Caco-2 (cell line): ENCODE measurements at regions of chr21 and their contacts with region 1.

Region 1: DNA sequence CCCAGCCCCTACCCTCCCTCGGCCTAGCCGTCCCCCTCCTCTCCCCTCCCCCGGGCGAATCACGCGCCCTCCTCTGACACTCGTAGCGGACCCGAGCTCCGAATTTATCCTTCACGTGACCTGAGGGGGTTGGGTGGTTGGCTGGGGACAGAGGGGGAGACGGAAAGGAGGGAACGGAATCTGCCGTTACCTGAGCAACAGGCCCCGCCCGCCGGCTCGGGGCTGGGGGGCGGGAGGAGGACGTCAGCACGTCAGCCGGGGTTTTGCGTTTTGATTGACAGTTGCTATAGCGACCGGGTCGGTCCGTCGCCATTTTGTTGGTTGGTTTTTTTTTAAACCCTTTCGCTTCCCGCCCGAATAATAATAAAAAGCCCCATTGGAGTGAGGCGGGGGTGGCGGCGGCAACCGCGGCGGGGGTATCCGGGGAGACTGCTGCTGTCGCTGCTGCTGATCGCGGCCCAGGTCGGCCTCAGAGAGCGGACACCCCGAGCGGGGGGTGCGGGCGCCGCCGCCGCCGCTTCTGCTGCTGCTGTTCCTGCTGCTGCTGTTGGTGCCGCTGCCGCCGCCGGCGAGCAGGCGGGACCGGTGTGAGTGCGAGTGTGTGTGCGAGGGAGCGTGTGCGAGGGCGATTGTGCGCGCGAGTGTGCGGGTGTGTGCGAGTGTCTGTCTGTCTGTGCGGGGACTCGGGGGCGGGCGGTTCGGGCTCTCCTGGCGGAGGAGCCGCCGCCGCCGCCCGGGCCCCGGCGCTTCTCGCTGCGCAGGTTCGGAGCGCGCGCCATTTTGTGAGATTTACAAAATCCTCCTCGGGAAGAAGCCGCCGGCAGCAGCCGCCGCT is at the start of gene DYRK1A:
- DNase-seq: peak; percentile 98 to 100
- H3K4me3 ChIP-seq: peak within 1 kb of the TSS; percentile 92
- H3K4me3 Mint-ChIP-seq: peak within 1 kb of the TSS; percentile 99
- H3K27ac Mint-ChIP-seq: peak within 1 kb of the TSS; percentile 100
- H3K4me1 ChIP-seq: peaks cover 31% of the 10 kb centered on the region
- H3K4me1 Mint-ChIP-seq: peaks cover 18% of the 10 kb centered on the region
- H3K27me3 ChIP-seq: no peaks in the 10 kb centered on the region
- H3K27me3 Mint-ChIP-seq: no peaks in the 10 kb centered on the region
- CTCF ChIP-seq: no peak
- total RNA-seq, gene DYRK1A: 50.9 and 51.5 TPM in 2 replicates

Region 2: GRCh38 chr21:36966066-36966820 is 400.5 kb before region 1 on chr21 and contains the start of gene HLCS:
- CTCF ChIA-PET with region 1: no interaction called
- POLR2A ChIA-PET with region 1: no interaction called
- intact Hi-C with region 1: loop called (anchors 5 kb)
- DNase-seq: peak; percentile 83 to 87
- H3K4me3 ChIP-seq: peak within 1 kb of the TSS; percentile 63
- H3K4me3 Mint-ChIP-seq: peak within 1 kb of the TSS; percentile 90
- H3K27ac Mint-ChIP-seq: peak within 1 kb of the TSS; percentile 98
- H3K4me1 ChIP-seq: peaks cover 26% of the 10 kb centered on the region
- H3K4me1 Mint-ChIP-seq: peaks cover 10% of the 10 kb centered on the region
- H3K27me3 ChIP-seq: no peaks in the 10 kb centered on the region
- H3K27me3 Mint-ChIP-seq: no peaks in the 10 kb centered on the region
- CTCF ChIP-seq: peak; percentile 22 to 30
- total RNA-seq, gene HLCS: 21.8 and 26.2 TPM in 2 replicates

Region 3: GRCh38 chr21:37220981-37221664 is 145.6 kb before region 1 on chr21:
- CTCF ChIA-PET with region 1: interaction called, 6 read pairs
- POLR2A ChIA-PET with region 1: interaction called, 5 read pairs
- intact Hi-C with region 1: loop called (anchors 5 kb)
- DNase-seq: peak; percentile 95 to 97
- H3K4me3 ChIP-seq: peak overlapping the region; percentile 79
- H3K4me3 Mint-ChIP-seq: peak overlapping the region; percentile 93
- H3K27ac Mint-ChIP-seq: peak overlapping the region; percentile 94
- H3K4me1 ChIP-seq: no peaks in the 10 kb centered on the region
- H3K4me1 Mint-ChIP-seq: peaks cover 11% of the 10 kb centered on the region
- H3K27me3 ChIP-seq: no peaks in the 10 kb centered on the region
- H3K27me3 Mint-ChIP-seq: no peaks in the 10 kb centered on the region
- CTCF ChIP-seq: peak in 1 of 2 experiments; percentile 48

Region 4: DNA sequence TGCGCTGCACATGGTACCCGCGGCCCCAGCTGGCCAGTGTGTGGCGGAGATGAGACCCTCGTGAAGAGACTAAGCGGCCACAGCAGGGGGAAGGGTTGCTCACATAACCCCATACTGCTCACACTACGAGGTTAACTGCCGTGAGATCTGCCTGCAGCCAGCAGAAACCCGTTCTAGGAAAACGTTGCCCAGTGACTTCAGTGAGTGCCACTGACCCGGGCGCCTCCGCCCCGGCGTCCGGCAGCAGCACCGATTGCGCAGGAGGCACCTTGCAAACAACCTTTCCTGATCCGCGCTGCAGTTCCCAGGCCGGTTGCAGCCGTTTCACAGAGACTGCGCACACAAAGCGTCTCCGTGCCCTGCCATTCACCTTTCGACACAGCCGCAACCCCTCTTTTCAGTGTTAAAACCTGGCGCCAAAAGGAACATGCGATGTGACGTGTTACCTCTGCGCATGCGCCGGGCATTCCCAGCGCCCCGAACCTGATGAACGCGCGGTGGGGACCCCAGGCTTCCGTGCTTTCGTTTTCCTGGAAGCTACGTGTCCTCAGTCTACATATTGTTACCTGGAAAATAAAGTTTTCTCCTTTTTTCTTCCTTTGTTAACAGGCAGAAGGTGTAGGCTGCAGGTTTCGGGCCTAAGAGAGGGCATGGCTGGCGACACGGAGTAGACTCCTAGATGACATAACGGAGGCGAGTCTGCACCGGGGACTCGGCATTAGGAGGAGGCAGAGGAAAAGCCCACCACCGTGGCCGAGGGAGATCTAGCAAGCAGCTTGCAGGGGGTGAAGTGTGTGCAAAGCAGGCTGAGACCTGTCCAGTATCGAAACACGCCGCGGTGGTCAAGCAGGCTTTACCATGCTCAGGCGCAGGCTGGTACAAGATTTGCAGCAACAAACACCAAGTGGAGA is 108.5 kb before region 1 on chr21:
- CTCF ChIA-PET with region 1: no interaction called
- POLR2A ChIA-PET with region 1: interaction called, 5 read pairs
- intact Hi-C with region 1: loop called (anchors 5 kb)
- DNase-seq: peak; percentile 78 to 85
- H3K4me3 ChIP-seq: peak overlapping the region; percentile 61
- H3K4me3 Mint-ChIP-seq: peak overlapping the region; percentile 94
- H3K27ac Mint-ChIP-seq: peak overlapping the region; percentile 96
- H3K4me1 ChIP-seq: no peaks in the 10 kb centered on the region
- H3K4me1 Mint-ChIP-seq: no peaks in the 10 kb centered on the region
- H3K27me3 ChIP-seq: no peaks in the 10 kb centered on the region
- H3K27me3 Mint-ChIP-seq: no peaks in the 10 kb centered on the region
- CTCF ChIP-seq: no peak

Region 5: GRCh38 chr21:37267269-37268184 is 99.2 kb before region 1 on chr21 and contains the start of gene VPS26C:
- CTCF ChIA-PET with region 1: no interaction called
- POLR2A ChIA-PET with region 1: interaction called, 25 read pairs
- intact Hi-C with region 1: loop called (anchors 1 kb)
- DNase-seq: peak; percentile 99
- H3K4me3 ChIP-seq: peak within 1 kb of the TSS; percentile 81
- H3K4me3 Mint-ChIP-seq: peak within 1 kb of the TSS; percentile 81
- H3K27ac Mint-ChIP-seq: peak within 1 kb of the TSS; percentile 95
- H3K4me1 ChIP-seq: no peaks in the 10 kb centered on the region
- H3K4me1 Mint-ChIP-seq: no peaks in the 10 kb centered on the region
- H3K27me3 ChIP-seq: no peaks in the 10 kb centered on the region
- H3K27me3 Mint-ChIP-seq: no peaks in the 10 kb centered on the region
- CTCF ChIP-seq: no peak
- total RNA-seq, gene VPS26C: 37.9 and 40.5 TPM in 2 replicates

Region 6: DNA sequence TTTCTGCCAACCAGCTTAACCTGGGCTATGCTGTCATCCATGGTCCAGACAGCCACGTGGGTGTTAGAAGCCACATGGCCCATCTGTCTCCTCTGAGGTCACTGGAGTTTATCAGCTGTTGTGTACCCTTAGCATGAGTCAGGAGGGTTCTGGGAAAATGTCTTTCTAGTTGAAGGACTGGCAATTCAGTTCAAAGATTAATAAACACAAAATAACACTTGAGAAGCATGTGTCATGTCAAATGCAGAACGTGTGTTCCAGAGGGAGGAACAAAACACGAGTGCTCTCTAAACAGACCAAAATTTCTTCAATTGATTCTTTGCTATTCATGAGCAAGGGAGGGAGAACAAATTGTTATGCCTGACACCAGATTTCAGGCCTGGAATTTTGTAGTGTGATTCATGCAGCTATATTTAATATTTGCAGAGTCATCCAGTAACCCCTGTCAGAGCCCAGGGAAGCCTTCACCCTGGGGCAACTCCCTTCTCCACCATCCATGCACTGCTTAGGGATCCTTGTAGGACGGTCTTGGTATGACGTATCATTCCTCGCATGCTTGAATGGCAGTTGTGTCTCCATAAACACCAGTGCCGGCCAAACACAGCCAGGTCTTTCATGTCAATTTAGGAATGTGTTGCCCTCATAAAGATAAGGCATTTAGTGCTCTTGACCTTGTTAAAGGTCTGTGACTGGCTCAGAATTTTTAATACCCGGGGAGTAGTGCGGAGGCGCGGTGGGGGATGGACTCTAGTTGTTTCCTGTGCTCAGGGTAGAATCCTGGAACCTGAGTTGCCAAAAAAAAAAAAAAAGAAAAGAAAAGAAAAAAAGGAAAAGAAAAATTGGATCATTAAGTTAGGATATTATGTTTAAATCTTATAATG is 27.8 kb before region 1 on chr21:
- CTCF ChIA-PET with region 1: no interaction called
- POLR2A ChIA-PET with region 1: interaction called, 4 read pairs
- intact Hi-C with region 1: loop called (anchors 2 kb)
- DNase-seq: peak; percentile 69 to 86
- H3K4me3 ChIP-seq: no peak overlapping the region; the same call in 1 of the 2 replicates
- H3K4me3 Mint-ChIP-seq: peak overlapping the region; percentile 64
- H3K27ac Mint-ChIP-seq: peak overlapping the region; percentile 53
- H3K4me1 ChIP-seq: peaks cover 16% of the 10 kb centered on the region
- H3K4me1 Mint-ChIP-seq: peaks cover 17% of the 10 kb centered on the region
- H3K27me3 ChIP-seq: no peaks in the 10 kb centered on the region
- H3K27me3 Mint-ChIP-seq: no peaks in the 10 kb centered on the region
- CTCF ChIP-seq: no peak

Region 7: DNA sequence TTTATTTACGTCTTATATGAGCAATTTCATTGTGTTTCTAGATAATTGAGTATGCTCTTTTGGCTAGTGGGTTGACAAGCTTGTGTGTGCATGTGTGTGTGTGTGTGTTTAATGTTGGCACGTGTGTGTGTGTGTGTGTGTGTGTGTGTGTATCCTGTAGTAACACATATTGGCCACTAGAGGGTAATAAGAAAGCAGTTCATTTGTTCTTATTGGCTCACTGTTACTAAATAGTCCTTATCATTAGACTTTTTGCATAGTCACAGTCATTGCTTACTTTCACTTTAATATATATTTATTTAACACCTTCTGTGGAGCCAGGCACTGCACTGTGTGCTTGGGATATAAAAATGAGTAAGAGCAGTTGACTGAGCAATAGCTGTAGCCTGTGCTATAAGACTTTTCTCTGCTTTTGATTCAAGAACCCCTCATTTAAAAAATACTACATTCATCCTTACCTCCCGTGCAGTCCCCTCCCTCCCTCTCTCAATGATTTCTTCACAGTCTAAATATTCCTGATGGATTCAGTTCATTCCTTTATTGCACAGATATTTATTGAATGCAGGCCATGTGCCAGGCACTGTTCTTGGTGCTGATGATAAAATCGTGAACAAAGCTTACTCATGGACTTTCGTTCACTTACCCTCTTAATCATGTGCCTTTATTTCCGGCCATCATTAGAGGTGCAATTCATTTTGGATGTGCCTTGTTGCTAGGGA is 96.5 kb after region 1 on chr21:
- CTCF ChIA-PET with region 1: no interaction called
- POLR2A ChIA-PET with region 1: no interaction called
- intact Hi-C with region 1: loop called (anchors 5 kb)
- DNase-seq: peak in 1 of 2 experiments; percentile 36
- H3K4me3 ChIP-seq: no peak overlapping the region
- H3K4me3 Mint-ChIP-seq: no peak overlapping the region
- H3K27ac Mint-ChIP-seq: no peak overlapping the region
- H3K4me1 ChIP-seq: peaks cover 19% of the 10 kb centered on the region
- H3K4me1 Mint-ChIP-seq: peaks cover 18% of the 10 kb centered on the region
- H3K27me3 ChIP-seq: no peaks in the 10 kb centered on the region
- H3K27me3 Mint-ChIP-seq: no peaks in the 10 kb centered on the region
- CTCF ChIP-seq: peak; percentile 50 to 51

Region 8: GRCh38 chr21:37532868-37533780 is 166.4 kb after region 1 on chr21:
- CTCF ChIA-PET with region 1: no interaction called
- POLR2A ChIA-PET with region 1: no interaction called
- intact Hi-C with region 1: no loop called
- DNase-seq: no peak
- H3K4me3 ChIP-seq: no peak overlapping the region
- H3K4me3 Mint-ChIP-seq: no peak overlapping the region
- H3K27ac Mint-ChIP-seq: no peak overlapping the region
- H3K4me1 ChIP-seq: 0 out of 2 replicates have a peak, but pooled peaks cover 6% of the 10 kb centered on the region
- H3K4me1 Mint-ChIP-seq: no peaks in the 10 kb centered on the region
- H3K27me3 ChIP-seq: no peaks in the 10 kb centered on the region
- H3K27me3 Mint-ChIP-seq: no peaks in the 10 kb centered on the region
- CTCF ChIP-seq: no peak